Spleen (tissue), 13 donors: ENCODE measurements at regions of chr19 and their contacts with region 1.

Region 1: DNA sequence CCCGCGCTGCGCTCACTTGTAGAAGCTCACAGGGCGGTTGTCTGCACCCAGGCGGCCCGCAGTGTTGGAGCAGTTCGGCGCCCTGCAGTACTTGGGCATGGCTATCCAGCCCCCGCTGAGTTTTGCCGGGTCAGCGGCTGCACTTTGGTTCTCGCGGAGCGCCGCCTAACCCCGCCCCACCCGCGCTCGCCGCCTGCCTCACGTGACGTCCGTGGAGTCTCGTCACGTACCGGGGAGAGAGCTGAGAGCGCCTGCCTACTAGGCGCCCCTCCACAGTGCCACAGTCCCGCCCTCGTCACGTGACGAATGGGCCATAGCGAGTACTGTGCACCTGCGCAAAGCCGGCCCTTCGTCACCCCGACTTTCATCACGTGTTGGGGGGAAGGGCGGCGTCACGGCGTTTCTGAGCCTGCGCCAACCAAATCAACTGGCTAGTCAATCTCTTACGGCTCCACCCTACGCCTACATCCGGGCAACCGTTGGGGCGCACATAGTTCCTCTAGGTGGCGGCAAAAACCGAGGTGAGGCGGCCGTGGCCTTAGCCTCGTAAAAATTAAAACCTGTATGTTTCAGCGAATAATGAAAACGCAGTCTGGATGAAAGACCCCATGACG is at the start of gene THAP8:
- DNase-seq: peak; percentile 100
- H3K4me3 ChIP-seq: peak within 1 kb of the TSS; percentile 60 to 87 (median 78)
- H3K27ac ChIP-seq: peak within 1 kb of the TSS; percentile 94 to 99 (median 98)
- H3K4me1 ChIP-seq: peaks cover 6 to 34% (median 21%) of the 10 kb centered on the region in 6 donors
- H3K27me3 ChIP-seq: no peaks in the 10 kb centered on the region
- CTCF ChIP-seq: peak; percentile 35 to 83 (median 77)
- POLR2A ChIP-seq: peak in 2 of 3 donors; percentile 31 to 50
- total RNA-seq, gene THAP8: 3.5 to 7.9 (median 5.1) TPM

Region 2: GRCh38 chr19:36114763-36115452 is 60.7 kb after region 1 on chr19 and contains the start of gene POLR2I:
- intact Hi-C with region 1: loop called (anchors 10 kb)
- DNase-seq: peak; percentile 99
- H3K4me3 ChIP-seq: peak within 1 kb of the TSS; percentile 55 to 96 (median 80)
- H3K27ac ChIP-seq: peak within 1 kb of the TSS; percentile 64 to 96 (median 92)
- H3K4me1 ChIP-seq: peaks cover 15 to 57% (median 35%) of the 10 kb centered on the region in 6 donors
- H3K27me3 ChIP-seq: no peaks in the 10 kb centered on the region
- CTCF ChIP-seq: peak in 2 of 11 experiments; percentile 23 to 33
- POLR2A ChIP-seq: peak in 1 of 3 donors; percentile 47
- total RNA-seq, gene POLR2I: 23.1 to 42.3 (median 36.6) TPM

Region 3: DNA sequence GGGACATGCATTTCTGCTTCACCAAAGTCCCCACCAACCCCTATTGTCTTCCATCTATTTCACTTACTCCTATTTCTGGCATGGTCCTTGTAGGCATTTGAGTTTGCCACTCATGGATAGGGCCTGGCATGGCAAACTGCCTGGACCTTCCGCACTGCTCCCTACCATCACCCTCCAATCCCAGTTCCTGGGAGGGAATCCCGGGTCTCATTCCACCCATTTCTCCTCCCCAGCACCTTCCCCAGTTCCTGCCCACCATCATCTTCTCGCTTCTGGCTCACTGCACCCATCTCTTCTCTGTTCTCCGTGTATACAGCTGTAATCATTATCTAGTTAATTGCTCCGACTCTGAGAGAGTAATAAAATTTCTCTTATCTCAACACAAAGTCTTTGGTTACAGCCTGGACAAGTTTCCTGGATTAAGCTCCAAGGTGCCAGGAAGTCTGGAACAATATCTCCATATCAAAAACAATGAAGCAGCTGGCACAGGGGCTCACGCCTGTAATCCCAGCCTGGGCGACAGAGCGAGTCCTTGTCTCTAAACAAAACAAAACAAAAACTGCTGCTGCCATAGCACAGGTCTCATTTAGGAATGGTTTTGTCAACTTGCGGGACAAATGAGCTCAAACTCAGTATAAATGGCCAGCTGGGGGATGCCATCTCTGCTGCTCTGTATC is 115.0 kb after region 1 on chr19:
- intact Hi-C with region 1: loop called (anchors 5 kb)
- DNase-seq: no peak
- H3K4me3 ChIP-seq: no peak overlapping the region
- H3K27ac ChIP-seq: peak overlapping the region; percentile 27 to 85 (median 72)
- H3K4me1 ChIP-seq: peaks cover 4 to 22% (median 9%) of the 10 kb centered on the region in 6 donors
- H3K27me3 ChIP-seq: no peaks in the 10 kb centered on the region
- CTCF ChIP-seq: no peak
- POLR2A ChIP-seq: no peak